ENCODE measurements at regions of chr11 and their contacts with region 1.

Region 1: DNA sequence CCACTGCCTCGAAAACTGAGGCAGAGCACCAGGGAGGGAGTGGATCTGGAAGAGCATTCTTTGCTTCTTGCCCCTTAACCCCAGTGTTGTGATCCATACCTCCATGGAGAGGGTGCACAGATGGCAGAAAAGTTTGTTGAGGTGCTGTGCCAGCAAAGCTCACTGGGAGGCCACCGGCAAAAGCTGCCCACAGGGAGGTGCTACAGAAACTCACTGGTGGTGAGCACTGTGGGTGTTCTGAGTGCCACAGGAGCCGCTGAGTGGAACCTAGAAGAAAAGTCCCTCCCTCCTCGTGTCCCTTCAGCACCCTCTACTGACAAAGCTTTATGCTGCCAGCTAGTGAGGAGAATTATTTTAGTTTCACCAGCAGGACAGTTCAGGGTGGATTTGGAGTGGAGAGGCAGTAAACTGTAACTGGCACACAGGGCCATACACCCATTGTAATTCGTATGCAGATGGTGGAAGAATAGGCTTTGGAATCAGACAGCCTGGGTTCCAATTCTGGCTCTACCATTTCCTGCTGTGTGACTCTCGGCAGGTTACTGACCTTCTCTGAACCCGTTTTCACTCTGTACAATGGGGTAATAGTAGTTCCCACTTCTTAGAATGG is 84.6 kb downstream of the SWAP70 start:
- DNase-seq: peak; percentile 25 to 83 (median 66)

Region 2: GRCh38 chr11:9573052-9573774 is 175.3 kb before region 1 on chr11 and contains the start of gene WEE1:
- intact Hi-C with region 1: no loop called
- DNase-seq: peak; percentile 85 to 98 (median 94)

Region 3: GRCh38 chr11:9688716-9689511 is 59.6 kb before region 1 on chr11:
- intact Hi-C with region 1: loop called (anchors 10 kb)
- DNase-seq: peak in 35 of 42 donors; percentile 8 to 81 (median 53)

Measured in head of caudate nucleus (tissue), 42 donors.